Mammary epithelial cell (primary cell): ENCODE measurements at regions of chr1 and their contacts with region 1.

Region 1: GRCh38 chr1:85307987-85308832 is 31.8 kb upstream of the BCL10 start:
- DNase-seq: peak; percentile 67
- H3K4me3 ChIP-seq: no peak overlapping the region
- H3K27ac ChIP-seq: peak overlapping the region; percentile 2
- H3K4me1 ChIP-seq: peaks cover 10% of the 10 kb centered on the region
- H3K27me3 ChIP-seq: no peaks in the 10 kb centered on the region
- CTCF ChIP-seq: peak; percentile 91 to 98

Region 2: GRCh38 chr1:85494904-85495266 is 186.7 kb after region 1 on chr1:
- CTCF ChIA-PET with region 1: no interaction called
- dilution Hi-C with region 1: no loop called
- in situ Hi-C with region 1: no loop called
- intact Hi-C with region 1: loop called (anchors 1 kb)
- DNase-seq: peak; percentile 70
- H3K4me3 ChIP-seq: no peak overlapping the region
- H3K27ac ChIP-seq: peak overlapping the region; percentile 67
- H3K4me1 ChIP-seq: peaks cover 24% of the 10 kb centered on the region
- H3K27me3 ChIP-seq: no peaks in the 10 kb centered on the region
- CTCF ChIP-seq: peak; percentile 81 to 84

Region 3: GRCh38 chr1:85581802-85582686 is 273.8 kb after region 1 on chr1:
- CTCF ChIA-PET with region 1: no interaction called
- dilution Hi-C with region 1: no loop called
- in situ Hi-C with region 1: loop called (anchors 10 to 25 kb)
- intact Hi-C with region 1: loop called (anchors 1 kb)
- DNase-seq: peak; percentile 72
- H3K4me3 ChIP-seq: peak overlapping the region; percentile 86 to 95 (median 92)
- H3K27ac ChIP-seq: peak overlapping the region; percentile 86
- H3K4me1 ChIP-seq: peaks cover 40% of the 10 kb centered on the region
- H3K27me3 ChIP-seq: no peaks in the 10 kb centered on the region
- CTCF ChIP-seq: peak; percentile 59 to 63

Region 4: GRCh38 chr1:85692730-85693314 is 384.6 kb after region 1 on chr1:
- CTCF ChIA-PET with region 1: interaction called, 10 read pairs
- dilution Hi-C with region 1: loop called (anchors 25 kb)
- in situ Hi-C with region 1: no loop called
- intact Hi-C with region 1: loop called (anchors 1 kb)
- DNase-seq: peak; percentile 17
- H3K4me3 ChIP-seq: no peak overlapping the region
- H3K27ac ChIP-seq: no peak overlapping the region
- H3K4me1 ChIP-seq: no peaks in the 10 kb centered on the region
- H3K27me3 ChIP-seq: no peaks in the 10 kb centered on the region
- CTCF ChIP-seq: peak; percentile 41 to 44

Region 5: GRCh38 chr1:85884372-85885035 is 576.3 kb after region 1 on chr1:
- CTCF ChIA-PET with region 1: no interaction called
- dilution Hi-C with region 1: no loop called
- in situ Hi-C with region 1: loop called in 1 of 2 experiments (anchors 25 kb)
- intact Hi-C with region 1: loop called (anchors 1 kb)
- DNase-seq: no peak
- H3K4me3 ChIP-seq: no peak overlapping the region
- H3K27ac ChIP-seq: no peak overlapping the region
- H3K4me1 ChIP-seq: no peaks in the 10 kb centered on the region
- H3K27me3 ChIP-seq: no peaks in the 10 kb centered on the region
- CTCF ChIP-seq: peak; percentile 39 to 63